ENCODE measurements at regions of chr2 and their contacts with region 1.

Region 1: GRCh38 chr2:71798266-71799012 is 345.1 kb downstream of the DYSF start:
- DNase-seq: peak; percentile 53
- ATAC-seq: peak; percentile 34
- H3K4me3 ChIP-seq: no peak overlapping the region
- H3K27ac ChIP-seq: no peak overlapping the region
- H3K4me1 ChIP-seq: peaks cover 21% of the 10 kb centered on the region
- H3K27me3 ChIP-seq: no peaks in the 10 kb centered on the region
- CTCF ChIP-seq: peak; percentile 94

Region 2: GRCh38 chr2:71545572-71546274 is 252.7 kb before region 1 on chr2:
- CTCF ChIA-PET with region 1: no interaction called
- POLR2A ChIA-PET with region 1: no interaction called
- intact Hi-C with region 1: loop called (anchors 5 kb)
- DNase-seq: peak; percentile 75
- ATAC-seq: peak; percentile 93
- H3K4me3 ChIP-seq: peak overlapping the region; percentile 64
- H3K27ac ChIP-seq: no peak overlapping the region
- H3K4me1 ChIP-seq: peaks cover 9% of the 10 kb centered on the region; the same call in 1 of the 2 replicates
- H3K27me3 ChIP-seq: no peaks in the 10 kb centered on the region
- CTCF ChIP-seq: peak; percentile 95

Region 3: GRCh38 chr2:71609958-71610357 is 188.5 kb before region 1 on chr2:
- CTCF ChIA-PET with region 1: interaction called, 4 read pairs
- POLR2A ChIA-PET with region 1: no interaction called
- intact Hi-C with region 1: loop called (anchors 2 kb)
- DNase-seq: peak; percentile 77
- ATAC-seq: peak; percentile 77
- H3K4me3 ChIP-seq: no peak overlapping the region
- H3K27ac ChIP-seq: no peak overlapping the region
- H3K4me1 ChIP-seq: peaks cover 5% of the 10 kb centered on the region; the same call in 1 of the 2 replicates
- H3K27me3 ChIP-seq: no peaks in the 10 kb centered on the region
- CTCF ChIP-seq: peak; percentile 63

Region 4: GRCh38 chr2:71812736-71813135 is 14.3 kb after region 1 on chr2:
- CTCF ChIA-PET with region 1: no interaction called
- POLR2A ChIA-PET with region 1: no interaction called
- intact Hi-C with region 1: no loop called
- DNase-seq: no peak
- ATAC-seq: no peak
- H3K4me3 ChIP-seq: no peak overlapping the region
- H3K27ac ChIP-seq: no peak overlapping the region
- H3K4me1 ChIP-seq: no peaks in the 10 kb centered on the region
- H3K27me3 ChIP-seq: peaks cover 23% of the 10 kb centered on the region
- CTCF ChIP-seq: no peak

Region 5: GRCh38 chr2:71879496-71880184 is 81.2 kb after region 1 on chr2:
- CTCF ChIA-PET with region 1: no interaction called
- POLR2A ChIA-PET with region 1: no interaction called
- intact Hi-C with region 1: loop called (anchors 10 kb)
- DNase-seq: no peak
- ATAC-seq: no peak
- H3K4me3 ChIP-seq: no peak overlapping the region
- H3K27ac ChIP-seq: no peak overlapping the region
- H3K4me1 ChIP-seq: peaks cover 9% of the 10 kb centered on the region
- H3K27me3 ChIP-seq: 0 out of 2 replicates have a peak, but pooled peaks cover 5% of the 10 kb centered on the region
- CTCF ChIP-seq: no peak

Region 6: GRCh38 chr2:72579591-72580180 is 781.2 kb after region 1 on chr2:
- CTCF ChIA-PET with region 1: no interaction called
- POLR2A ChIA-PET with region 1: no interaction called
- intact Hi-C with region 1: loop called (anchors 10 kb)
- DNase-seq: peak; percentile 68
- ATAC-seq: peak; percentile 31; the same call in 1 of the 2 replicates
- H3K4me3 ChIP-seq: no peak overlapping the region
- H3K27ac ChIP-seq: no peak overlapping the region
- H3K4me1 ChIP-seq: no peaks in the 10 kb centered on the region
- H3K27me3 ChIP-seq: no peaks in the 10 kb centered on the region
- CTCF ChIP-seq: peak; percentile 84

Measured in PC-3 (cell line).